Endothelial cell of umbilical vein (primary cell): ENCODE measurements at regions of chr1 and their contacts with region 1.

Region 1: DNA sequence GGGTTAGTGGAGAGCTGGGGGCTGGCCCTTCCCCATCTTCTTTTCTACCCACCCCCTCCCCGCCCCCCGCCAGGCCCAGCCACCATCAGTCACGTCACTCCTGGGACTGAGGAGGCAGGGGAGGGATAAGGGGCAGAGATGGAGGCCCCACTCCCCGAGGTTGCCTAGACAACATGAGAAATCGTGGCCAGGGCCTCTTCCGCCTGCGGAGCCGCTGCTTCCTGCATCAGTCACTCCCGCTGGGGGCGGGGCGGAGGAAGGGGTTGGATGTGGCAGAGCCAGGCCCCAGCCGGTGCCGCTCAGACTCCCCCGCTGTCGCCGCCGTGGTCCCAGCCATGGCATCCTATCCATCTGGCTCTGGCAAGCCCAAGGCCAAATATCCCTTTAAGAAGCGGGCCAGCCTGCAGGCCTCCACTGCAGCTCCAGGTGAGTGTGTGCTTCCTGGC is 1.2 kb downstream of the AMPD2 start:
- DNase-seq: peak; percentile 95
- H3K4me3 ChIP-seq: peak overlapping the region; percentile 74 to 83 (median 76)
- H3K27ac ChIP-seq: peak overlapping the region; percentile 97
- H3K4me1 ChIP-seq: peaks cover 49% of the 10 kb centered on the region
- H3K27me3 ChIP-seq: no peaks in the 10 kb centered on the region
- CTCF ChIP-seq: no peak
- POLR2A ChIP-seq: no peak

Region 2: DNA sequence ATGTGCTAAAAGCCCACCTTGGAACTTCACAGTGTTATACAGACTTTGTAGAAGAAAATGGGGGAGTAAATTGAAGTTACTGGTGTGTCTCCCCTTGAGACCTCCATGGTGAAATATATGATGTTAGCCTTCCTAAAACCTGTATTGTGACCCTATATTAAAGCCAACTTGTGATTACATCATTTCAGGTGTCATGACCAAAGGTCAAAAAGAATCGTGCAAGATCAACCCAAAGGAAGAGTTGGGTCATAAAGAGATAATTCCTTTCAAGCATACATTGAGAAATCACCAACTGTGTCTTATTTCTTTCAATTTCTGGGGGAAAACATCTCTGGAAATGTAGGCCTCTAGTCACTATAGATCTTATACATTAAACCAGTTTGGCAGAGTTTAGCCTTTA is 36.1 kb before region 1 on chr1:
- CTCF ChIA-PET with region 1: interaction called, 5 read pairs
- POLR2A ChIA-PET with region 1: no interaction called
- dilution Hi-C with region 1: no loop called
- intact Hi-C with region 1: loop called (anchors 5 kb)
- DNase-seq: no peak
- H3K4me3 ChIP-seq: no peak overlapping the region
- H3K27ac ChIP-seq: no peak overlapping the region
- H3K4me1 ChIP-seq: peaks cover 12% of the 10 kb centered on the region
- H3K27me3 ChIP-seq: no peaks in the 10 kb centered on the region
- CTCF ChIP-seq: no peak
- POLR2A ChIP-seq: no peak

Region 3: GRCh38 chr1:109598655-109599054 is 22.2 kb before region 1 on chr1:
- CTCF ChIA-PET with region 1: interaction called, 13 read pairs
- POLR2A ChIA-PET with region 1: interaction called, 3 read pairs
- dilution Hi-C with region 1: no loop called
- intact Hi-C with region 1: loop called (anchors 1 kb)
- DNase-seq: no peak
- H3K4me3 ChIP-seq: no peak overlapping the region
- H3K27ac ChIP-seq: no peak overlapping the region
- H3K4me1 ChIP-seq: peaks cover 15% of the 10 kb centered on the region
- H3K27me3 ChIP-seq: no peaks in the 10 kb centered on the region
- CTCF ChIP-seq: peak in 1 of 2 donors; percentile 20
- POLR2A ChIP-seq: no peak